ENCODE measurements at regions of chr12 and their contacts with region 1.

Region 1: GRCh38 chr12:129893691-129894090 is 10.1 kb downstream of the TMEM132D start:
- DNase-seq: no peak
- ATAC-seq: no peak
- H3K4me3 ChIP-seq: no peak overlapping the region
- H3K4me3 Mint-ChIP-seq: no peak overlapping the region
- H3K27ac ChIP-seq: no peak overlapping the region
- H3K27ac Mint-ChIP-seq: no peak overlapping the region
- H3K4me1 ChIP-seq: no peaks in the 10 kb centered on the region
- H3K4me1 Mint-ChIP-seq: no peaks in the 10 kb centered on the region
- H3K27me3 ChIP-seq: no peaks in the 10 kb centered on the region
- H3K27me3 Mint-ChIP-seq: peaks cover 7% of the 10 kb centered on the region
- CTCF ChIP-seq: no peak

Region 2: DNA sequence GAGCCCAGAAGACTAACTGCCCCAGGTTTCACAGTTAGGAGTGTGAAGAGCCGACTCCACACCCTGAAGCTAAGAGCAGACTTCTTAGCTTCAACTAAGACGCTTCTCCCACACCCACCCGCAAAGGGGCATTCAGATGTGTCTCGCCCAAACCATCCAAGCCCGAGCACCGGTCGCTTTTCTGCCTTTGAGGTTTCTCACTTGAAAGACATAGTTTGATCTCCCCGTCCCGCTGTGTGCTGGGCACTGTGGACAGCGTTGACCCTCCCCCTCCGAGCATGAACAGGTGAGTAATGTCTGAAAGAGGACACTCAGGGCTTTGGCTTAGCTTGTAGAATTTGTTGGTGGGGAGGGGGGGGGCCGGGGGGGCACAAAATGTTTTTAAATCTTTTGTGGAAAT is 113.7 kb before region 1 on chr12:
- CTCF ChIA-PET with region 1: no interaction called
- POLR2A ChIA-PET with region 1: no interaction called
- intact Hi-C with region 1: loop called in 1 of 2 experiments (anchors 5 kb)
- DNase-seq: no peak
- ATAC-seq: no peak
- H3K4me3 ChIP-seq: no peak overlapping the region
- H3K4me3 Mint-ChIP-seq: no peak overlapping the region
- H3K27ac ChIP-seq: no peak overlapping the region
- H3K27ac Mint-ChIP-seq: no peak overlapping the region
- H3K4me1 ChIP-seq: no peaks in the 10 kb centered on the region
- H3K4me1 Mint-ChIP-seq: no peaks in the 10 kb centered on the region
- H3K27me3 ChIP-seq: no peaks in the 10 kb centered on the region
- H3K27me3 Mint-ChIP-seq: no peaks in the 10 kb centered on the region
- CTCF ChIP-seq: no peak

Region 3: GRCh38 chr12:129877411-129877810 is 16.3 kb before region 1 on chr12:
- CTCF ChIA-PET with region 1: no interaction called
- POLR2A ChIA-PET with region 1: no interaction called
- intact Hi-C with region 1: no loop called
- DNase-seq: no peak
- ATAC-seq: no peak
- H3K4me3 ChIP-seq: no peak overlapping the region
- H3K4me3 Mint-ChIP-seq: no peak overlapping the region
- H3K27ac ChIP-seq: no peak overlapping the region
- H3K27ac Mint-ChIP-seq: no peak overlapping the region
- H3K4me1 ChIP-seq: no peaks in the 10 kb centered on the region
- H3K4me1 Mint-ChIP-seq: no peaks in the 10 kb centered on the region
- H3K27me3 ChIP-seq: no peaks in the 10 kb centered on the region
- H3K27me3 Mint-ChIP-seq: peaks cover 4% of the 10 kb centered on the region
- CTCF ChIP-seq: no peak

Measured in CD4-positive, alpha-beta T cell (primary cell).